Activated naive CD4-positive, alpha-beta T cell treated with anti-CD3 and anti-CD28 coated beads for 36 hours (primary cell): ENCODE measurements at regions of chr15 and their contacts with region 1.

Region 1: DNA sequence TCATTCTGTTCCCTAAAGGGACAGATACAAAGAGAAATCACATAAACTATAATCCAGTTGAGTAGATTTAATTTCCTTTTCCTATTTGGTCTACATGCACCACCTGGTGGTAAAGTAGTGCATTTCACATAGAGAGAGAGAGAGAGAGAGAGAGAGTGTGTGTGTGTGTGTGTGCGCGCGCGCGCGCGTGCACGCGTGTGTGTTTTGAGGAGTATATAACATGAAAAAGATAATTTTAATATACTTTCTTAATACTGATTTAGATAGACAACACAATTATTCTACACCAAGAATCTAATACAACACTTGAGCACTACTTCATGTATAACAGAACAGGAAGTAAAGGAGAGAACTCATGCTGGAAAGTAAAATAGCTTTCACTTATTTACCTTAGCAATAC is 1.1 kb upstream of the FGF7 start:
- DNase-seq: peak; percentile 25
- H3K4me3 Mint-ChIP-seq: no peak overlapping the region
- H3K27ac Mint-ChIP-seq: no peak overlapping the region
- H3K4me1 Mint-ChIP-seq: peaks cover 4% of the 10 kb centered on the region
- H3K27me3 Mint-ChIP-seq: no peaks in the 10 kb centered on the region

Region 2: GRCh38 chr15:48358229-48358641 is 1063.8 kb before region 1 on chr15:
- CTCF ChIA-PET with region 1: no interaction called
- intact Hi-C with region 1: loop called (anchors 2 kb)
- DNase-seq: no peak
- H3K4me3 Mint-ChIP-seq: no peak overlapping the region
- H3K27ac Mint-ChIP-seq: no peak overlapping the region
- H3K4me1 Mint-ChIP-seq: peaks cover 4% of the 10 kb centered on the region
- H3K27me3 Mint-ChIP-seq: no peaks in the 10 kb centered on the region

Region 3: DNA sequence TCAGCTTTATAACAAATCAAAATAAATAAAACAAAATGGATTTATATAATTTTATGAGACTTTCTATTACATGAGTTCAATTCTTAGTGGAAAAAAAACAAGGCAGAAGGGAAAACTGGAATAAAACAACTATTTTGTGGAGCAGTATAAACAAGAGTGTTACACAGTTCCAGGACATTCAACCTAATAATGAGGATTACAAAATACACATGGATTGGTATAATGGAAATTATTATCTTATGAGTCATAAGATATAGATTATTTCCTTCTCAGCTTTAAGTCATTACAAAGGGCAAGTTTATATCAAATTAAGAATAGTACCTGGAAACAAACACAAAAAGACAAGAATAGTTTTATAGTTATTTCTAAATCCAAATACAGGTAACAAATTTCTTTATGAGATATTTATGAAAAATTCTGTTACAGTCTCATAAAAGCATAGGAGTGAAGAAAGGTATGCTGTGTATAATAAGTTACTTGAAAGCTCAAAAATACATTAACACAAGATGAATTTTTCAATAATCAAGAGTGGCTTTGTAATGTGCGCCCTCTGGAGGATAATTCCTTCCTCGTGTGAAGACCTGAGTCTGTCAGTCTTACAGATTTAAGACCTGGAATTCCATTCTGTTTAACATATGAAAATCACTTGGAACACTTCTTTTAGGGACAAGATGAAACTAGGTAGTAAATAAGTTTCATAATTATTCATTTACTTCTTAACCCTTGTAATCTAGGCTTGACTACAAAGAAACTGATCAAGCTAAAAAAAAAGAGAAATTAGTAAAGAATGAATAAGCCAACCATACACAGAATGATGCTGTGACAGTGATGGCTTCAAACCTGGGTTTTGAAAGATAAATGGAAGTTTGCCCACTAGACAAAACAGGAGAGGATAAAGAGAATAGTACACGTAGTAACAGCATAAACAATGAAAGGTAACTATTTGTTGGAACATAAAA is 276.1 kb before region 1 on chr15:
- CTCF ChIA-PET with region 1: no interaction called
- intact Hi-C with region 1: loop called (anchors 5 kb)
- DNase-seq: peak; percentile 52
- H3K4me3 Mint-ChIP-seq: no peak overlapping the region
- H3K27ac Mint-ChIP-seq: no peak overlapping the region
- H3K4me1 Mint-ChIP-seq: peaks cover 43% of the 10 kb centered on the region
- H3K27me3 Mint-ChIP-seq: no peaks in the 10 kb centered on the region

Region 4: DNA sequence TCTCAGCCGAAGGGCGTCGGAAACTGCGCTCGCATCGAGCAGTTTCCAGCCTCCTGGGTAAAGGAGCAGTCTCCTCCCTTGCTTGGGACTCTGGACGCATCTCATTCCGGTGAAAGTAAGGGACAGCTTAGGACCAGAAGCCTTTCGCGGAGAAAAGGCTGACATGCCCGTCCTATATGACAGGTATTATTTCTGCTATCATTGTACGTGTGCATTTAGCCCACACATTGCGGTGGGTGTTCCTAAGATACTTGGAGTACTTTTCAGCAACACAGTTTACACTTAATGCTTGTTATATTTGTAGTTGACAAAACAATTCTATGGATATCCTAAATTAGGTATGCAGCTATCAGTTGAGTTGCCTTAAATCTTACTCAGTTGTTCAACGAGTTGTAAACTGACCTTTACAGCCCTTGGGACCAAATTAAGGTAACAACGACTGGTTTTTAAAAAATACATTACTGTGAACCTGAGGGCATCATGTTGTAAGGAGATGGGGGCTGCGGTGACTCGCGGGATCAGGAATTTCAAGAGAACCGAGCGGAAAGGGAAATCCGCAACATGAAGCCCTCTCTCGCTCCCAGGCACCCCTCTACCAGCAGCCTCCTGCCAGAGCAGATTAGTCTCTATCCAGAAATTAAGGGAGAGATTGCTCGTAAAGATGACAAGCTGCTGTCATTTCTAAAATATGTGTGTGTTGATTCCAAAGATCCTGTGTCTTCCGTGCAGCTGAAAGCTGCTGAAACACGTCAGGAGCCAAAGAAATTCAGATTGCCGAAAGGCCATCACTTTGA is 266.0 kb before region 1 on chr15:
- CTCF ChIA-PET with region 1: no interaction called
- intact Hi-C with region 1: no loop called
- DNase-seq: no peak
- H3K4me3 Mint-ChIP-seq: peak overlapping the region; percentile 98
- H3K27ac Mint-ChIP-seq: peak overlapping the region; percentile 97
- H3K4me1 Mint-ChIP-seq: peaks cover 38% of the 10 kb centered on the region
- H3K27me3 Mint-ChIP-seq: no peaks in the 10 kb centered on the region

Region 5: DNA sequence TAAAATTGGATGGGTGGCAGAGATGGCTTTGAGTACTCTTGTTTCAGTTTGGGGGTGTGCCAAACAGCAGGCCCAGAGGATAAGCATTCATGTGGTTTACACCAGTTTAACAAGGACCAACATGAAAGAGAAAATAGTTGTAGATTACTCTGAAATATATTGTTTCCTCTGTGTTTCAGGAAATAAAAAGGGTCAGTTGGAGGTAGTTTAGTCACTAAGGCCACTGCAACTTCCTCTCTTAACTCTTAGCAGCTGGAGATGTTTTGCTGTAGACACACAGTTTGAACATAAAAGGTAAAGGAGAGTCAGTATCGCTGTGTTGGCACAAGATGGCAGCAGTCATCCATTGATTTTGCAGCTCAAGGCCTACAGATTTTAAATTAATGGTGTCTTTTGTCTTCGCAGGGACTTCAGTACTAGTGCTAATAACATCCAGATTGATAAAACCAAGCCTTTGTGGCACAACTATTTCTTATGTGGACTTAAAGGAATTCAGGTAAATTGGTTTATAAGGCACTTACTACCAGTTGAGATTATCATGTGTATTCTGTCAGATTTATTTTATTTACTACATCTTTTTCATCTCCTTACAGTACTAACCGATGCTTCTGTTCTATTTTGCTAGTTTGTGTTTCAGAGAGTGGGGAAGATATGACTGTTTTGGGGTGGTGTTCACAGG is 186.4 kb before region 1 on chr15:
- CTCF ChIA-PET with region 1: interaction called, 31 read pairs
- intact Hi-C with region 1: loop called (anchors 1 kb)
- DNase-seq: peak; percentile 67
- H3K4me3 Mint-ChIP-seq: no peak overlapping the region
- H3K27ac Mint-ChIP-seq: no peak overlapping the region
- H3K4me1 Mint-ChIP-seq: peaks cover 3% of the 10 kb centered on the region
- H3K27me3 Mint-ChIP-seq: no peaks in the 10 kb centered on the region

Region 6: GRCh38 chr15:49370782-49371181 is 51.2 kb before region 1 on chr15:
- CTCF ChIA-PET with region 1: no interaction called
- intact Hi-C with region 1: no loop called
- DNase-seq: no peak
- H3K4me3 Mint-ChIP-seq: no peak overlapping the region
- H3K27ac Mint-ChIP-seq: no peak overlapping the region
- H3K4me1 Mint-ChIP-seq: no peaks in the 10 kb centered on the region
- H3K27me3 Mint-ChIP-seq: no peaks in the 10 kb centered on the region